ENCODE measurements at regions of chr17 and their contacts with region 1.

Region 1: GRCh38 chr17:79749156-79749815 is 18.5 kb downstream of the ENPP7 start:
- DNase-seq: no peak
- ATAC-seq: no peak
- H3K4me3 ChIP-seq: no peak overlapping the region
- H3K4me3 Mint-ChIP-seq: no peak overlapping the region
- H3K27ac ChIP-seq: no peak overlapping the region
- H3K27ac Mint-ChIP-seq: no peak overlapping the region
- H3K4me1 ChIP-seq: peaks cover 2 to 27% of the 10 kb centered on the region in 2 experiments
- H3K4me1 Mint-ChIP-seq: peaks cover 20 to 23% (median 22%) of the 10 kb centered on the region in 3 donors
- H3K27me3 ChIP-seq: peaks cover 4 to 58% of the 10 kb centered on the region in 2 experiments
- H3K27me3 Mint-ChIP-seq: peaks cover 35 to 61% of the 10 kb centered on the region in 2 donors

Region 2: GRCh38 chr17:79728226-79728907 is 20.9 kb before region 1 on chr17:
- CTCF ChIA-PET with region 1: interaction called in 1 of 2 experiments, 16 read pairs
- POLR2A ChIA-PET with region 1: no interaction called
- DNase-seq: peak; percentile 55 to 94 (median 85)
- ATAC-seq: peak; percentile 84 to 93 (median 86)
- H3K4me3 ChIP-seq: peak overlapping the region; percentile 39 to 44
- H3K4me3 Mint-ChIP-seq: peak overlapping the region; percentile 54 to 73 (median 67)
- H3K27ac ChIP-seq: peak overlapping the region; percentile 49
- H3K27ac Mint-ChIP-seq: peak overlapping the region; percentile 86 to 91
- H3K4me1 ChIP-seq: peaks cover 3 to 15% of the 10 kb centered on the region in 2 experiments
- H3K4me1 Mint-ChIP-seq: peaks cover 14 to 30% (median 19%) of the 10 kb centered on the region in 3 donors
- H3K27me3 ChIP-seq: no peaks in the 10 kb centered on the region
- H3K27me3 Mint-ChIP-seq: no peaks in the 10 kb centered on the region

Region 3: GRCh38 chr17:79814127-79814974 is 65.1 kb after region 1 on chr17:
- CTCF ChIA-PET with region 1: no interaction called
- POLR2A ChIA-PET with region 1: no interaction called
- DNase-seq: peak in 1 of 35 experiments; percentile 38
- ATAC-seq: no peak
- H3K4me3 ChIP-seq: peak overlapping the region in 1 of 2 donors; percentile 34
- H3K4me3 Mint-ChIP-seq: peak overlapping the region; percentile 54 to 69 (median 55)
- H3K27ac ChIP-seq: no peak overlapping the region
- H3K27ac Mint-ChIP-seq: peak overlapping the region in 1 of 2 donors; percentile 63
- H3K4me1 ChIP-seq: peaks cover 14 to 55% of the 10 kb centered on the region in 2 experiments
- H3K4me1 Mint-ChIP-seq: peaks cover 24 to 27% (median 27%) of the 10 kb centered on the region in 3 donors
- H3K27me3 ChIP-seq: peaks cover 5 to 77% of the 10 kb centered on the region in 2 experiments
- H3K27me3 Mint-ChIP-seq: peaks cover 27 to 54% of the 10 kb centered on the region in 2 donors

Region 4: GRCh38 chr17:79888811-79889634 is 139.7 kb after region 1 on chr17:
- CTCF ChIA-PET with region 1: interaction called in 1 of 2 experiments, 12 read pairs
- POLR2A ChIA-PET with region 1: no interaction called
- DNase-seq: no peak
- ATAC-seq: no peak
- H3K4me3 ChIP-seq: no peak overlapping the region
- H3K4me3 Mint-ChIP-seq: no peak overlapping the region
- H3K27ac ChIP-seq: no peak overlapping the region
- H3K27ac Mint-ChIP-seq: peak overlapping the region in 1 of 2 donors; percentile 59
- H3K4me1 ChIP-seq: no peaks in the 10 kb centered on the region
- H3K4me1 Mint-ChIP-seq: no peaks in the 10 kb centered on the region
- H3K27me3 ChIP-seq: peaks cover 0 to 73% of the 10 kb centered on the region in 2 experiments
- H3K27me3 Mint-ChIP-seq: peaks cover 33 to 40% of the 10 kb centered on the region in 2 donors